Activated CD8-positive, alpha-beta memory T cell treated with anti-CD3 and anti-CD28 coated beads, Interleukin-2, amount 10 ng/mL, durations not matched to agents 7 days and 5 days (primary cell): ENCODE measurements at regions of chr16 and their contacts with region 1.

Region 1: DNA sequence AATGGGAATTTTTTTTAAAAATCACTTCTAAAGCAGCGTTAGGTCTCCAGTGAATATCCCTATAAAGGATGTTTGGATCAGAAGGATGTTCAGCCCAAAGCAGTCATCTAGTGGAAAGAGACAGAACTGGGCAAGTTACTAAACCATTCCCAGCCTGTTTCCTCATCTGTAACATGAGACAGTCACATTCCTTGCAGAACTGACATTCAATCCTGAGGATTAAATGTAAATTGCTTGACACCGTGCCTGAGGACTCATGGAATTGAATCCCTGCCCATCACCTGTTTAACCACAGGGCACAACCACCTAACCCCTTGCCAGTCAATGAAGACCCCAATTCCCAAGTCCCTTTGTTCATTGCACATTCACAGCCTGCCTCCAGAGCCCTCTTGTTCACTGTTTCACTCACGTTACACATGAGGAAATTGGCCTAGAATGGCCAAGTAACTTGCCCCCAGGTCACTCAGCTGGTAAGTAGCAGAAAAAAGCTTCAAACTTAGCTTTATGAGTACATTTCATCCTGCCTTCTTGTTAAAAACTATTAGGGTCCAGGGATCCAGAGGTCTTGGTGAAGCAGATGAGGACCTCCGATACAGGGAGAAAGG is 1.4 kb downstream of the CMTM2 start:
- DNase-seq: no peak
- ATAC-seq: no peak
- H3K4me3 Mint-ChIP-seq: no peak overlapping the region
- H3K27ac Mint-ChIP-seq: no peak overlapping the region
- H3K4me1 Mint-ChIP-seq: peaks cover 14% of the 10 kb centered on the region
- H3K27me3 Mint-ChIP-seq: peaks cover 42% of the 10 kb centered on the region

Region 2: GRCh38 chr16:66562407-66562806 is 18.3 kb before region 1 on chr16:
- CTCF ChIA-PET with region 1: interaction called, 10 read pairs
- DNase-seq: no peak
- ATAC-seq: no peak
- H3K4me3 Mint-ChIP-seq: no peak overlapping the region
- H3K27ac Mint-ChIP-seq: peak overlapping the region; percentile 75
- H3K4me1 Mint-ChIP-seq: peaks cover 71% of the 10 kb centered on the region
- H3K27me3 Mint-ChIP-seq: no peaks in the 10 kb centered on the region